Activated B cell treated with CpG ODN at 0.5 μM for 24 hours (primary cell): ENCODE measurements at regions of chr1 and their contacts with region 1.

Region 1: DNA sequence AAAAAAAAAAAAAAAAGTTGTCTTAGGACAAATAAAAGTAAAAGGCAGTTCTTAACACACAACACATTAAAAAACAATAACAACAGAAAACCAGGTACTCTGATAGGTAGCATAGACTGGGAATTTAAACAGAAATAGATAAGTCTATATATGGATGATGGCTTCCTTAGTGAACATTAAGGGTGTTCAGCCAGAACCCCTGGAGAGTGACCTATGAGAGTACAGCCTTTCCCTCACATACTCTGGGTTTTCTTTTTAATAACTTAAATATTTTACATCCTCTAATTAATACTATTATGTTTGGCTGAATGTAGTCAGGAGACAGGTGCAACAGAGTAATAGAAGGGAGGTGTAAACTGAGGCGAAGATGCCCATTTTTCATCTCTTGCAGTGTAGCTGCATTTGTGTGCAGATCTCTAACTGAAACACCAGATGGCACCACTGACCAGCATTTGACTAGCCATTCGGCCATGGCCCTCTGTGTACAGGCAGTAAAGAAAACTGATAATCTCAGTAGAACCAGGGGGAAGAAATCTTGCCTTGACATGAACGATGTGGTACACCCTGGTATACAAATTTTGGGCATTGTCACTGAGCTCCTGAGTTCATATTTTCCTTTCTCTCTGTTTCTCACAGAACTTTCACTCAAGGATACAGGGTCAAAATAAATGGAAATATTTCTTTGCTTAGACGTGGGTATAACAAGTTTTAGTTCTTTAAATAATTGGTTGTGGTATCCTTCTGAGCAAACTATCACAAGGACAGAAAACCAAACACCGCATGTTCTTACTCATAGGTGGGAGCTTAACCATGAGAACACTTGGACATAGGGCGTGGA is 7.6 kb downstream of the TTF2 start:
- DNase-seq: no peak
- ATAC-seq: peak; percentile 85
- H3K4me3 Mint-ChIP-seq: no peak overlapping the region
- H3K27ac Mint-ChIP-seq: no peak overlapping the region
- H3K4me1 Mint-ChIP-seq: peaks cover 3% of the 10 kb centered on the region
- H3K27me3 Mint-ChIP-seq: no peaks in the 10 kb centered on the region
- CTCF ChIP-seq: no peak

Region 2: DNA sequence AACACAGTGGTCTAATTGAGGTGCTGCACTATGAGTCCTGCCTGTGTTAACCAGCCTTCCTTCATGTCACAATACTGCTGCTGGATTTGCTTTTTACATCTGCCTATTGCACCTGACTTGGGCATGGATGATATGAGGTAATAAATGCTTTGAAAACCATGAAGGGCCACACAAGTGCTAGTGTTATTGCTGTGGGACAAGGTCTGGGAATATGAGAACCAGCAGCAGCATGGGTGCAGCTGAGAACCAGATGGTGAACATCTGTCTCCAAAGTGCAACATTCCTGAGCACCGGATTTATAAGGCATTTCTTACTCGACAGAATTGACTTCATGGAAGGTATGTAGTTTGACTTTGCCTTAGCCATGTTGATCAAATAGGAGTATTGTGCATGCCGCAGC is 37.2 kb after region 1 on chr1:
- CTCF ChIA-PET with region 1: no interaction called
- POLR2A ChIA-PET with region 1: no interaction called
- intact Hi-C with region 1: no loop called
- DNase-seq: no peak
- ATAC-seq: no peak
- H3K4me3 Mint-ChIP-seq: no peak overlapping the region
- H3K27ac Mint-ChIP-seq: no peak overlapping the region
- H3K4me1 Mint-ChIP-seq: no peaks in the 10 kb centered on the region
- H3K27me3 Mint-ChIP-seq: no peaks in the 10 kb centered on the region
- CTCF ChIP-seq: no peak

Region 3: GRCh38 chr1:117128323-117129079 is 60.7 kb after region 1 on chr1:
- CTCF ChIA-PET with region 1: interaction called, 31 read pairs
- POLR2A ChIA-PET with region 1: no interaction called
- intact Hi-C with region 1: loop called (anchors 1 kb)
- DNase-seq: no peak
- ATAC-seq: no peak
- H3K4me3 Mint-ChIP-seq: no peak overlapping the region
- H3K27ac Mint-ChIP-seq: no peak overlapping the region
- H3K4me1 Mint-ChIP-seq: peaks cover 1% of the 10 kb centered on the region
- H3K27me3 Mint-ChIP-seq: peaks cover 4% of the 10 kb centered on the region
- CTCF ChIP-seq: no peak

Region 4: DNA sequence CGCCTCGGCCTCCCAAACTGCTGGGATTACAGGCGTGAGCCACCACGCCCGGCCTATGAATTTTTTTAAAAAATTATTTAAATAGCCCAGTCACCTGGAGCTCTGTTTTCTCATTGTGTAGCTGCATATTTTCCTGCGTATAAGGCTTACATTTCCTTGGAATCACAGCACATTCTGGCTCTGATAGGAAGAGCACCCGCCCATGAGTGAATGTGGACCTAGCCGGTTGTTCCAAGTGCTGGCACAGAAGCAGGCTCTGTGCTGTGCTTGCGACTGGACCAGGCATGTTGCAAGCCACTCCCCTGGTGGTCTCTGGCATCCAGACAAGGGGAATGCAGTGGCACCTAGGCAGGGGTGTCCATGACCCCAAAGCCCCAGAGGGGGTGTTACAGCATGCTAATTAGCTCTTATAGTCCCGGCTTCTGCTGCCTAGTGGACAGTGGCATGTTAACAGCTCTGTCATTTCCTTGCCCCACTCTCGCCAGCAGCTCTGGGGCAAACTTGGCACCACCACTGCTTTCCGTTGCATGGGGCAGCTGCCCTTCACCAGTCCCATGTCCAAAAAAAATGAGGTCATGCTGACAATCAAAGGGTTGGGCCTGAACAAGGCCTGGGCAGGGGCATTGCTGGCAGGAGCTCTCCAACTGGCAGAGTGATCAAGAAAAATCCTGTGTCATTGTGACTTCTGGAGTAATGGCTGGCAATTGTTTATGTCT is 148.1 kb after region 1 on chr1:
- CTCF ChIA-PET with region 1: no interaction called
- POLR2A ChIA-PET with region 1: no interaction called
- intact Hi-C with region 1: no loop called
- DNase-seq: no peak
- ATAC-seq: no peak
- H3K4me3 Mint-ChIP-seq: no peak overlapping the region
- H3K27ac Mint-ChIP-seq: no peak overlapping the region
- H3K4me1 Mint-ChIP-seq: no peaks in the 10 kb centered on the region
- H3K27me3 Mint-ChIP-seq: peaks cover 3% of the 10 kb centered on the region
- CTCF ChIP-seq: no peak

Region 5: DNA sequence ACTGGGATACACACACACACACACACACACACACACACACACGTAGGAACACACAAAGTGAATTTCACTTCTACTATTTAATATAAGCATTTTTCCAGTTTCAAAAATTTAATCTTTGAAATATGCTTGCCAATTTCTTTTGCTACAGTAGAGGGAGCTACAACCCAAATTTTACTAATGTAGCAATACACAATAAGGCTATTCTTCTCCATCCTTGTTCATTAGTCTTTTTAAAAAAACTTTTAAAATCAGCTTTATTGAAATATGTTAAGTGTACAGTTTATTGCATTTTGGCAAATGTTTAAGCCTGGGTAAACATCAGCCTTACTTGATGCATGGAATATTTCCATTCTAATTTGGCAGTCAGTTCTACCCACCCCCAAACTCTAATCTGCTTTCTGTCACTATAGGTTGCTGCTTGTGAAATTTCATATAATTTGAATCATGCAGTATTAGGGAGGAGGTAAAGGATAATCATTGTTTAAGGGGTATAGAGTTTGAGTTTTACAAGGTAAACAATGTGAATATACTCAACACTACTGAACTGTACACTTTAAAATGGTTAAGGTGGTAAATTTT is 445.1 kb after region 1 on chr1:
- CTCF ChIA-PET with region 1: no interaction called
- POLR2A ChIA-PET with region 1: no interaction called
- intact Hi-C with region 1: loop called (anchors 5 kb)
- DNase-seq: no peak
- ATAC-seq: no peak
- H3K4me3 Mint-ChIP-seq: no peak overlapping the region
- H3K27ac Mint-ChIP-seq: no peak overlapping the region
- H3K4me1 Mint-ChIP-seq: peaks cover 4% of the 10 kb centered on the region
- H3K27me3 Mint-ChIP-seq: no peaks in the 10 kb centered on the region
- CTCF ChIP-seq: no peak